ENCODE measurements at regions of chr3 and their contacts with region 1.

Region 1: GRCh38 chr3:197224034-197224444 is 74.4 kb downstream of the DLG1 start:
- DNase-seq: peak in 3 of 14 experiments; percentile 43 to 57 (median 57)
- ATAC-seq: no peak
- H3K4me3 ChIP-seq: no peak overlapping the region
- H3K4me3 Mint-ChIP-seq: no peak overlapping the region
- H3K27ac ChIP-seq: no peak overlapping the region
- H3K27ac Mint-ChIP-seq: no peak overlapping the region
- H3K4me1 ChIP-seq: no peaks in the 10 kb centered on the region
- H3K4me1 Mint-ChIP-seq: peaks cover 60% of the 10 kb centered on the region
- H3K27me3 ChIP-seq: no peaks in the 10 kb centered on the region
- H3K27me3 Mint-ChIP-seq: no peaks in the 10 kb centered on the region
- CTCF ChIP-seq: peak; percentile 57

Region 2: DNA sequence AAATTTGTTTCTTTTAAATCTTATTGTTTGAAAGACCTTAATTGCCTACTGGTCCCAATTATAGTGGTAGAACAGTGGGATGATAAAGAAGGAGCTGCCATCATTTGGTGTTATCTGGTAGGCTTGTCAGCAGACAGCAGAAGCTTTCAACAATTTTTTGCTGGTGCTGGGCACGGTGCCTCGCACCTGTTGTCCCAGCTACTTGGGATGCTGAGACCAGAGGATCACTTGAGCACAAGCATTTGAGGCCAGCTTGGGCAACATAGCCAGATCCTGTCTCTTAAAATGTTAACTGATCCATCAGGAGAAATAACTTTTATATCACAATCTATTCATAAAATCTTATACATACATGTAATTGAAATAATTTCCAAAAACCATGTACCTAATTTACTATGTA is 320.3 kb before region 1 on chr3:
- CTCF ChIA-PET with region 1: no interaction called
- POLR2A ChIA-PET with region 1: no interaction called
- intact Hi-C with region 1: no loop called
- DNase-seq: no peak
- ATAC-seq: no peak
- H3K4me3 ChIP-seq: no peak overlapping the region
- H3K4me3 Mint-ChIP-seq: no peak overlapping the region
- H3K27ac ChIP-seq: no peak overlapping the region
- H3K27ac Mint-ChIP-seq: no peak overlapping the region
- H3K4me1 ChIP-seq: no peaks in the 10 kb centered on the region
- H3K4me1 Mint-ChIP-seq: no peaks in the 10 kb centered on the region
- H3K27me3 ChIP-seq: no peaks in the 10 kb centered on the region
- H3K27me3 Mint-ChIP-seq: no peaks in the 10 kb centered on the region
- CTCF ChIP-seq: no peak

Region 3: DNA sequence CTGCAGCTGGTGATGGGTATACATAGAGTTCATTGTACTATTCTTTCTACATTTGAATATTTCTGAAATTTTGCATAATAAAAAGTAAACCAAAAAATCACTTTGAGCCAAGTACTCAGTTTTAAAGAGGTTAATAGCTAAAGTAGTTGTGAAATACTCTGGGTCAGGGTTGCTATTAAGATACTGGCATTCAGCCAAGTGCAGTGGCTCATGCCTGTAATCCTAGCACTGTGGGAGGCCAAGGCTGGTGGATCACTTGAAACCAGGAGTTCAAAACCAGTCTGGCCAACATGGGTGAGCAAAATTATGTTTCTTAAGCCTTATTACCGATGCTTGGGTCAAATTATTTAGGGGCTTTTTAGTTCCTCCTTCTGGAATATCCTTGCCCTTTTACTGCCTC is 72.5 kb before region 1 on chr3:
- CTCF ChIA-PET with region 1: no interaction called
- POLR2A ChIA-PET with region 1: no interaction called
- intact Hi-C with region 1: no loop called
- DNase-seq: no peak
- ATAC-seq: no peak
- H3K4me3 ChIP-seq: no peak overlapping the region
- H3K4me3 Mint-ChIP-seq: no peak overlapping the region
- H3K27ac ChIP-seq: no peak overlapping the region
- H3K27ac Mint-ChIP-seq: no peak overlapping the region
- H3K4me1 ChIP-seq: no peaks in the 10 kb centered on the region
- H3K4me1 Mint-ChIP-seq: peaks cover 12% of the 10 kb centered on the region
- H3K27me3 ChIP-seq: no peaks in the 10 kb centered on the region
- H3K27me3 Mint-ChIP-seq: no peaks in the 10 kb centered on the region
- CTCF ChIP-seq: no peak

Region 4: GRCh38 chr3:197249542-197249941 is 25.5 kb after region 1 on chr3:
- CTCF ChIA-PET with region 1: no interaction called
- POLR2A ChIA-PET with region 1: no interaction called
- intact Hi-C with region 1: no loop called
- DNase-seq: no peak
- ATAC-seq: no peak
- H3K4me3 ChIP-seq: no peak overlapping the region
- H3K4me3 Mint-ChIP-seq: no peak overlapping the region
- H3K27ac ChIP-seq: no peak overlapping the region
- H3K27ac Mint-ChIP-seq: no peak overlapping the region
- H3K4me1 ChIP-seq: peaks cover 4% of the 10 kb centered on the region
- H3K4me1 Mint-ChIP-seq: peaks cover 45% of the 10 kb centered on the region
- H3K27me3 ChIP-seq: no peaks in the 10 kb centered on the region
- H3K27me3 Mint-ChIP-seq: no peaks in the 10 kb centered on the region
- CTCF ChIP-seq: no peak

Region 5: DNA sequence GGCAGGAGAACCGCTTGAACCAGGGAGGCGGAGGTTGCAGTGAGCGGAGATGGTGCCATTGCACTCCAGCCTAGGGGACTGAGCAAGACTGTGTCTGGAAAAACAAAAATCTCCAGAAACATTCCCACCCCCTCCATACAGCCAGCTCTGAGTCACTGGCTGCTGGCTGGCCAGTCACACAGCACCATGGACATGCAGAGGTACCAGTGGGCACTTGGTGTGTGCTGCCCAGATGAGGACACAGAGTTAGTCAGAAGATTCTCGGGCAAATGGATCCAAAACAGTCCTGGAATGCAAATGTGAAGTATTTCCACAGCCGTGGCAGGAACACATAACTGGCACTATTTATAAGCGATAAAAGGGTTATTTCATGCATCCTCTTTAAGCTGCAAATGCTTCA is 287.1 kb after region 1 on chr3:
- CTCF ChIA-PET with region 1: interaction called, 3 read pairs
- POLR2A ChIA-PET with region 1: no interaction called
- intact Hi-C with region 1: loop called (anchors 1 kb)
- DNase-seq: no peak
- ATAC-seq: no peak
- H3K4me3 ChIP-seq: no peak overlapping the region
- H3K4me3 Mint-ChIP-seq: no peak overlapping the region
- H3K27ac ChIP-seq: no peak overlapping the region
- H3K27ac Mint-ChIP-seq: no peak overlapping the region
- H3K4me1 ChIP-seq: peaks cover 8% of the 10 kb centered on the region
- H3K4me1 Mint-ChIP-seq: peaks cover 3% of the 10 kb centered on the region
- H3K27me3 ChIP-seq: no peaks in the 10 kb centered on the region
- H3K27me3 Mint-ChIP-seq: no peaks in the 10 kb centered on the region
- CTCF ChIP-seq: no peak

Measured in CD4-positive, alpha-beta T cell (primary cell).